ENCODE measurements at regions of chr16 and their contacts with region 1.

Region 1: GRCh38 chr16:11255737-11256660 is at the start of gene SOCS1:
- H3K4me3 Mint-ChIP-seq: peak within 1 kb of the TSS; percentile 99
- H3K27ac Mint-ChIP-seq: peak within 1 kb of the TSS; percentile 99
- H3K4me1 Mint-ChIP-seq: peaks cover 54% of the 10 kb centered on the region
- H3K27me3 Mint-ChIP-seq: peaks cover 11% of the 10 kb centered on the region

Region 2: DNA sequence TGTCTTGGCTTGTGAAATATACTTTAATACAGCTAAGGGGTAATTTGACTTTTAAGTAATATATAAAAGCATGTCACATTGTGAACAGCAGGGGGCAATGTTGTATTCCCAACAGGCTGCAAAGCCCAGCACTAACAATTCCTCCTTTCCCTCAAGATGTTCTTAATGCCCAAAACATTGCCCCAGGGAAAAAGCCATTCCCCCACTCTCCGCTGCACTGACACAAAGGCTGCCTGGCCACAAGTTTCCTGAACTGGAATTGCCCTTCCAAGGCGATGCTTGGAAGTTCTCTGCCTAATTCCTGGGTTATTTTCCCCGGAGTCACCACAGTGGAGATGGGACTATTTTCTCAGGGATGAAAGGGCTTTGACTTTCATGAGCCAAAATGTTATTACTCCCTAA is 284.4 kb before region 1 on chr16:
- intact Hi-C with region 1: loop called (anchors 1 kb)
- H3K4me3 Mint-ChIP-seq: no peak overlapping the region
- H3K27ac Mint-ChIP-seq: peak overlapping the region; percentile 81
- H3K4me1 Mint-ChIP-seq: peaks cover 62% of the 10 kb centered on the region
- H3K27me3 Mint-ChIP-seq: no peaks in the 10 kb centered on the region

Region 3: DNA sequence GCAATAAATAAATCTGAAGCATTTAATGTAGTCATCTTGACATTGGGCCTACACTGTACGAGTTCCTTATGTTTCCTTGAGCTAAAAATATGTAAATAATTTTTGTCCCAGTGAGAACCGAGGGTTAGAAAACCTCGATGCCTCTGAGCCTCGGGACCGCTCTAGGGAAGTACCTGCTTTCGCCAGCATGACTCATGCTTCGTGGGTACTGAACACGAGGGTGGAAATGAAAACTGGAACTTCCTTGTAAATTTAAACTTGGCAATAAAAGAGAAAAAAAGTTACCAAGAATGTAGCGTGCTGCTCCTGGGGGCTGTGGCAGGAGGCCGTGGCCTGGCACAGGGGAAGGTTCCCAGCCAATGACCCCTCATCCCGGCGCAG is 74.1 kb before region 1 on chr16:
- intact Hi-C with region 1: loop called (anchors 5 kb)
- H3K4me3 Mint-ChIP-seq: peak overlapping the region; percentile 82
- H3K27ac Mint-ChIP-seq: peak overlapping the region; percentile 90
- H3K4me1 Mint-ChIP-seq: peaks cover 81% of the 10 kb centered on the region
- H3K27me3 Mint-ChIP-seq: no peaks in the 10 kb centered on the region

Region 4: GRCh38 chr16:11272500-11272899 is 16.5 kb after region 1 on chr16:
- intact Hi-C with region 1: no loop called
- H3K4me3 Mint-ChIP-seq: no peak overlapping the region
- H3K27ac Mint-ChIP-seq: peak overlapping the region; percentile 87
- H3K4me1 Mint-ChIP-seq: peaks cover 45% of the 10 kb centered on the region
- H3K27me3 Mint-ChIP-seq: peaks cover 49% of the 10 kb centered on the region

Region 5: GRCh38 chr16:11312718-11313492 is 56.9 kb after region 1 on chr16:
- intact Hi-C with region 1: loop called (anchors 1 kb)
- H3K4me3 Mint-ChIP-seq: no peak overlapping the region
- H3K27ac Mint-ChIP-seq: peak overlapping the region; percentile 83
- H3K4me1 Mint-ChIP-seq: peaks cover 76% of the 10 kb centered on the region
- H3K27me3 Mint-ChIP-seq: peaks cover 40% of the 10 kb centered on the region

Region 6: DNA sequence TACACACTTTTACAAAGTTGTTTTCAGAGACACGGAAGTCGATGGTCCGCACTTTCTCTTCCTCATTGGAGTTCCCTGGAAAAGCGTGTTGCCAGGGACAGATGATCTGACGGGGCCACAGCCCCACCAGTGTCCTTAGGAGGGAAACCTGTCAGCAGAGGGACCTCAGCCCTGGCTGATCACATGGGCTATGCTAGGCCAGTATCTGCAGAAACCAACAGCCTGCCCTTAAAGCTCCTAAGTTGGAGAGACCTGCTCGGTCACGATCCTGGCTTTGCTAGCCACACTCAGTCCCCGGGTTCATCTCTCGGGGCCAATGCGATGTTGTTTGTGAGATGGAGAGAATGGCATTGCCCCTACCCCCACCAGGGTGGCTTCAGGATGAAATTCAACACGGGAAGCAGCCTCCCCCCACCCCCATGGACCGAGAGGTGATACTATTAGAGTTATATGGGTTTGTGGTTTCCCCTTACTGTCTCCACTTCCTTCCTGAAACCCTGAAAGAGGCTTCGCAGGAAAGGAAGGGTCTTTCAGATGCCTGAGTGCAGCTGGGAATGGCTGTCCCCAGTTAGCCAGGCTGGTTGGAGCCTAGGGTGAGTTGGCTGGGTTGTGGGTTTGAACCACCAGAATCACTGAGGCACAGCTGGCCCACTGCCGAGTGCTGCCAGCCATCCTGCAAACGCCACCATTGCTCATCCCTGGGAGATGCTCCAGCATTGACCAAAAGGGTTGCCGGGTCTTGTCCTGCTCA is 105.9 kb after region 1 on chr16:
- intact Hi-C with region 1: loop called (anchors 2 kb)
- H3K4me3 Mint-ChIP-seq: peak overlapping the region; percentile 74
- H3K27ac Mint-ChIP-seq: peak overlapping the region; percentile 98
- H3K4me1 Mint-ChIP-seq: peaks cover 97% of the 10 kb centered on the region
- H3K27me3 Mint-ChIP-seq: peaks cover 35% of the 10 kb centered on the region

Measured in dendritic cell treated with granulocyte-macrophage colony-stimulating factor and Interleukin-4, amounts not matched to agents 40 ng/mL and 50 ng/mL, for 4 days (primary cell).